ENCODE measurements at regions of chr5 and their contacts with region 1.

Region 1: DNA sequence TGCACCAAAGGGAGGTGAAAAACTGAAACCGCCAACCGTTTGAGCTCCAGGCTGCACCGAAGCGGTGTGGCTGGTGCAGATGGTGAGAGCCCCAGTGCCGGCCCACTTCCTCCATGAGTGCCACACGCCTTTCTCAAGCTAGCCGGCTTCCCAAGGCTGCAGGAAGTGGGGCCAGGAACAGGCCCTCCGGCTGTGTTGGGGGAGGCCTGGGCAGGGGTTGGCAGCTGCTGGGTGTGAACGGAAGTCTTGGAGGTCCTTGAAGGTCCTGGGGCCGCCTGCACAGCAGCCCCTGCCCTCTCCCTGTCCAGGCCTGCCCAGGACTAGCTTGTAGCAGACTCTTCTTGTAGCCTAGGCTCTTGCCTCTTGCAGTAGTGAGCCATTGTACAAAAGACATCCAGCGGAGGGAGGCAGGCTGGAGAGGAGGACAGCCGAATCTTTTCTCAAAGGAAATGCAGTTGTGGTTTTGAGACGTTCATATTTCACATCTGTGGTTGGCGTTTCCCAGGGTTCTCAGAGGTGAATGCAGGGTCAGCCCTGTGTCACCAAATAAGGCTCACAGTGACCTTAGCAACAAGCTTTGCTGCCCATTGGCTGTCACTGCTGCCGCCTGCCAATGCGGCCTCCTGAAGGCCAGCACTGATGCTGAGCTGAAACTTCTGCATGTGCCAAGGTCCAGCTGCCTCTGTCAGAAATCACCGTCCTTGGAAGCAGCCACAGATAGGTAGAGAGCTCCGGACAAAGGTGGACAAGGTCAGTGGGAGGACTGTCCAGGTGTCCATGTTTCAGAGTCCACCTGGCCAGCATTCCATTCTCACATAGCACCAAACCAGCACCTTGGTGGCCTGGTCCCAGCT is 23.9 kb downstream of the IRF1 start:
- DNase-seq: peak; percentile 93
- ATAC-seq: peak; percentile 77
- H3K4me3 Mint-ChIP-seq: peak overlapping the region; percentile 59
- H3K27ac Mint-ChIP-seq: peak overlapping the region; percentile 86
- H3K4me1 Mint-ChIP-seq: peaks cover 98% of the 10 kb centered on the region
- H3K27me3 Mint-ChIP-seq: no peaks in the 10 kb centered on the region

Region 2: GRCh38 chr5:132437604-132438266 is 28.9 kb before region 1 on chr5:
- CTCF ChIA-PET with region 1: interaction called, 38 read pairs
- DNase-seq: peak; percentile 86
- ATAC-seq: peak; percentile 96
- H3K4me3 Mint-ChIP-seq: peak overlapping the region; percentile 43
- H3K27ac Mint-ChIP-seq: peak overlapping the region; percentile 86
- H3K4me1 Mint-ChIP-seq: peaks cover 81% of the 10 kb centered on the region
- H3K27me3 Mint-ChIP-seq: no peaks in the 10 kb centered on the region

Measured in activated CD8-positive, alpha-beta memory T cell treated with anti-CD3 and anti-CD28 coated beads, Interleukin-2, amount 10 ng/mL, durations not matched to agents 7 days and 5 days (primary cell).